ENCODE measurements at regions of chr18 and their contacts with region 1.

Region 1: GRCh38 chr18:3665780-3666525 is 216.0 kb downstream of the TGIF1 start:
- DNase-seq: peak; percentile 81
- H3K4me3 Mint-ChIP-seq: no peak overlapping the region
- H3K27ac Mint-ChIP-seq: no peak overlapping the region
- H3K4me1 Mint-ChIP-seq: peaks cover 23% of the 10 kb centered on the region
- H3K27me3 Mint-ChIP-seq: no peaks in the 10 kb centered on the region

Region 2: DNA sequence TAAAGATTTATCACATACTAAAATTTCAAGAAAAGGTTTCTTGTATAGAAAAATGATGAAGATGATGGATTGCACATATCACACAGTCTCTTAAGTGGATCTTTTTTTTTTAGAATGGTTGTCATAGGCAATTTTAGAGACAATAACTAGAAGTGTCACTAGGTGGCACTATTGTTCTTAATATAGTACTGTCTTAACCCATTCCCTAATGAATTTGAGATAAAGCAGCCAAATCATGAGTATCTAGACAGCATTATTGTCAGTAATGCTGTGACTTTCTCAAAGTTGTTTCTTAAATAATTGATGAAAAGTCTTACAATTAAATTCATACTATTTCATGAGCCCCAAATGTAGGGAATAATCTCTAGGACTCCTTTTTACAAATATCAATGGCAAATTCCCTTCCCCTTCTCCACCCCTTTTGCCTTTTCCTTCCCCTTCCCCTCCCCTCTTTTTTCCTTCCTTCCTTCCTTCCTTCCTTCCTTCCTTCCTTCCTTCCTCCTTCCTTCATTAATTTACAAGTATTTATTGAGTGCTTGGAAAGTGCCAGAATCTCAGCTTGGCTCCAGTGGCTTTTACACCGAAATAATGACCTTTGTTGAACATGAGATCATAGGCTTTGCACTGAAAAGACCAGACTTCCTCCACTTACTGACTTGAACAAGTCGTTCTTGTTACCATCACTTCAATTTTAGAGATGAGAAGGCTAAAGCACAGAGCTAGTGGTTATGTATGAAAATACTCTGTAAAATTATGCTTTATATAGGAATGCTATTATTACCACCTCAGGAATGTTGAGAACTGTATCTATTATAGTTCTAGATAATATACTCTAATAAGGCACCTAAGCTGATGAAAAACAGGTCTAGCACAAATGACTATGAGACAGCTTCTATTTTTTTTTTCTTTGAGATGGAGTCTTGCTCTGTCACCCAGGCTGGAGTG is 384.2 kb before region 1 on chr18:
- CTCF ChIA-PET with region 1: interaction called, 275 read pairs
- POLR2A ChIA-PET with region 1: no interaction called
- intact Hi-C with region 1: loop called (anchors 1 kb)
- DNase-seq: no peak
- H3K4me3 Mint-ChIP-seq: no peak overlapping the region
- H3K27ac Mint-ChIP-seq: no peak overlapping the region
- H3K4me1 Mint-ChIP-seq: peaks cover 6% of the 10 kb centered on the region
- H3K27me3 Mint-ChIP-seq: no peaks in the 10 kb centered on the region

Region 3: GRCh38 chr18:3380384-3380961 is 285.5 kb before region 1 on chr18:
- CTCF ChIA-PET with region 1: interaction called, 12 read pairs
- POLR2A ChIA-PET with region 1: no interaction called
- intact Hi-C with region 1: loop called (anchors 2 kb)
- DNase-seq: peak; percentile 57
- H3K4me3 Mint-ChIP-seq: no peak overlapping the region
- H3K27ac Mint-ChIP-seq: no peak overlapping the region
- H3K4me1 Mint-ChIP-seq: peaks cover 9% of the 10 kb centered on the region
- H3K27me3 Mint-ChIP-seq: peaks cover 13% of the 10 kb centered on the region

Region 4: DNA sequence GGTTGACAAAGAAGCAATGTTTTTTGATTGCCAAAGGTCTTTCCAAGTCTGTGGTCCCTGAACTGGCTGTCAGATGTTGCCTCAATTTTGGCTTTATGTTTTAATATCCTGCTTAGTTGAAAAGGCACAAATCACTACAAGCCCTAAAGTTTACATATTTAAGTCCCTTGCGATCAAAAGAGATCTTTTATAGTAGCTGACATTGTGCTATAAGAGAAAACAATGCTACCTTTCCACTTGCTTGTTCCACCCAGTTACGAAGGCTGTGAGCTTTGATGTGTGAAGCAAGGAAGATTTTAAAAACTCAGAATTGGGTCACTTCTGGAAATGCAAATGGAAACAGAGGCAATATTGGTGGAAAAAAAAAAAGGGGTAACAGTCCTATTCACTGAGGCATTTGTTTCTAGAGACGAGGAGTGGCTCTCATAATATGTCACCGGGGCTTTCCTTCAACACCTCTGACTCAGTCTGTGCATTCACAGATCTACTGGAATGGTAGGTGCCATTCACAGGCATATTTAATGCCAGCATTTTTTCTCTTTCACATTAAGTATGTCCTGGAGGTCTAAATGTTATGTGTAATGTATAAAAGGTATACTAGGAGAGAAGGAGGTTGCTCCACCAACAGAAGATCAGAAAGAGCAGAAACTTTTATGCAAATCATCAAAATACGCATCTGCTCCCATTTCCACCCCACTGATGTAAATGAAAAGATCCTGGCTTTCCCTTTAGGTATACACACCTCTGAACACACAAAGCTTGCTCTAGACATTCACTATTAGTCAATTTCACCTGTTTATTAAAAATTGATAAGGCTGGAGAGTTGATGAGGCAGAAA is 124.2 kb before region 1 on chr18:
- CTCF ChIA-PET with region 1: interaction called, 5 read pairs
- POLR2A ChIA-PET with region 1: no interaction called
- intact Hi-C with region 1: loop called (anchors 5 kb)
- DNase-seq: peak; percentile 68
- H3K4me3 Mint-ChIP-seq: peak overlapping the region; percentile 8
- H3K27ac Mint-ChIP-seq: peak overlapping the region; percentile 59
- H3K4me1 Mint-ChIP-seq: peaks cover 35% of the 10 kb centered on the region
- H3K27me3 Mint-ChIP-seq: no peaks in the 10 kb centered on the region

Region 5: GRCh38 chr18:3623769-3624545 is 42.0 kb before region 1 on chr18:
- CTCF ChIA-PET with region 1: interaction called, 3 read pairs
- POLR2A ChIA-PET with region 1: no interaction called
- intact Hi-C with region 1: loop called (anchors 2 kb)
- DNase-seq: peak; percentile 64
- H3K4me3 Mint-ChIP-seq: peak overlapping the region; percentile 58
- H3K27ac Mint-ChIP-seq: peak overlapping the region; percentile 88
- H3K4me1 Mint-ChIP-seq: peaks cover 40% of the 10 kb centered on the region
- H3K27me3 Mint-ChIP-seq: no peaks in the 10 kb centered on the region

Region 6: GRCh38 chr18:3683483-3683882 is 17.5 kb after region 1 on chr18:
- CTCF ChIA-PET with region 1: interaction called, 15 read pairs
- POLR2A ChIA-PET with region 1: no interaction called
- intact Hi-C with region 1: no loop called
- DNase-seq: no peak
- H3K4me3 Mint-ChIP-seq: no peak overlapping the region
- H3K27ac Mint-ChIP-seq: no peak overlapping the region
- H3K4me1 Mint-ChIP-seq: no peaks in the 10 kb centered on the region
- H3K27me3 Mint-ChIP-seq: peaks cover 4% of the 10 kb centered on the region